Activated CD8-positive, alpha-beta T cell treated with anti-CD3 and anti-CD28 coated beads, Interleukin-2, amount 10 ng/mL, durations not matched to agents 7 days and 5 days (primary cell): ENCODE measurements at regions of chr10 and their contacts with region 1.

Region 1: DNA sequence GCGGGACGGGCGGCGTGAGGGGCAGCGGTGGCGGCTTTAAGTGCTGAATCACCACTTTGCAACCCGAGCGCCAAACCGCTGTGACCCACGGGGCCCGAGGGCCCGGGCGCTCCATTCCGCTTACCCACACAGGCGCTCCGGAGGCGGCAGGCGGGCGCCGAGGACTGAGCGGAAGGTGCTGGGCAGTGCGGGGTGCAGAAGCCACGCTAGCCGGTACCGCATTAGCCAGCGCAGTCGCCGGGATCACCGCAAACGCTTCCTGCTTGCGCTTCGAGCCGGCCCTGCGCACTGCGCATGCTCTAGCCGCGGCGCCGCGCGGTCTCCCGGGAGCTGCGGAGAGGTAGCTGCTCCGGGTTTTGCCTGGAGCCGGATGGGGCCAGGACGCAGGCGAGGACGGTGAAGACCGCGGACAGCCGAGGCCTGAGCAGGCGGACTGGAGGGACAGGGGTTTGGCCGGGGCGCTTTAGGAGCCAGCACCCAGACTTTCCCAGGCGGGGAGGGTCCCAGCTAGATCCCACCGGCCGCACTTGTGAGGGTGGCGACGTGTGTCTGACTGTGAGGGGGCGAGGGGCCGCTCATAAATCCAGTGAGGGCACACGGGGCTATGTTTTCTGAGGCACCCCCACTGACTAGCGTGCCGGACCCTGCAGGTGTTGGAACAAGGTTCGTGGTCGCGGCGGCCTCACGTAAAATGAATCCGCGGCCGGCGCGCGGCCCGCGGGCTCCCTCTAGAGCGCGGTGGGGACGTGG is at the start of gene IDE:
- DNase-seq: peak; percentile 87
- ATAC-seq: peak; percentile 82
- H3K4me3 Mint-ChIP-seq: peak within 1 kb of the TSS; percentile 80
- H3K27ac Mint-ChIP-seq: peak within 1 kb of the TSS; percentile 84
- H3K4me1 Mint-ChIP-seq: peaks cover 23% of the 10 kb centered on the region
- H3K27me3 Mint-ChIP-seq: peaks cover 2% of the 10 kb centered on the region
- total RNA-seq, gene IDE: 12.5 to 13.4 TPM

Region 2: DNA sequence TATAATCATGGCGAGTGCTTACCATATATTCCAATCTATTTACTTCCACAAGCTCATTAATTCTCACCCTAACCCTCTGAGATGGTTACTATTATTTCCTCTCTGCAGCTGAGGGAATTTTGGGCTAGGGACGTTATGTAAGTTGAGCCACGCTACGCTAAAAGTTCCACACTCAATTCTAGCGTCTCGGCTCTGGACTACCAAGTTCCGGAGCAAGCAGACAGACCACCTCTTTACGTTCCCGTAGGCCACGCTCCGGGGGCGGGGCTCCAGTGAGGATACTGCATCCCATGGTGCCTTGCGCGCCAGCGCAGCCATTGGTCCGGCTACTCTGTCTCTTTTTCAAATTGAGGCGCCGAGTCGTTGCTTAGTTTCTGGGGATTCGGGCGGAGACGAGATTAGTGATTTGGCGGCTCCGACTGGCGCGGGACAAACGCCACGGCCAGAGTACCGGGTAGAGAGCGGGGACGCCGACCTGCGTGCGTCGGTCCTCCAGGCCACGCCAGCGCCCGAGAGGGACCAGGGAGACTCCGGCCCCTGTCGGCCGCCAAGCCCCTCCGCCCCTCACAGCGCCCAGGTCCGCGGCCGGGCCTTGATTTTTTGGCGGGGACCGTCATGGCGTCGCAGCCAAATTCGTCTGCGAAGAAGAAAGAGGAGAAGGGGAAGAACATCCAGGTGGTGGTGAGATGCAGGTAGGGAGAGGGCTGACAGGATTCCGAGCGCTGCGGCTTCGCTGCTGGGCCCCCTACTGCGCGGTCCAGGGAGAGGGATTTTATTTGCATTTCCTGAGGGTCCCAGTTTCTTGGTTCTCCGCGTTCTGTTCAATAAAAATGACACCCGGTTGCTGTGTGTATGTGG is 19.0 kb after region 1 on chr10 and contains the start of gene KIF11:
- CTCF ChIA-PET with region 1: interaction called, 38 read pairs
- POLR2A ChIA-PET with region 1: interaction called, 47 read pairs
- DNase-seq: peak; percentile 98
- ATAC-seq: peak; percentile 92
- H3K4me3 Mint-ChIP-seq: peak within 1 kb of the TSS; percentile 88
- H3K27ac Mint-ChIP-seq: peak within 1 kb of the TSS; percentile 97
- H3K4me1 Mint-ChIP-seq: peaks cover 53% of the 10 kb centered on the region
- H3K27me3 Mint-ChIP-seq: no peaks in the 10 kb centered on the region
- total RNA-seq, gene KIF11: 85.2 to 87.0 TPM